HCT116 (cell line): ENCODE measurements at regions of chr3 and their contacts with region 1.

Region 1: DNA sequence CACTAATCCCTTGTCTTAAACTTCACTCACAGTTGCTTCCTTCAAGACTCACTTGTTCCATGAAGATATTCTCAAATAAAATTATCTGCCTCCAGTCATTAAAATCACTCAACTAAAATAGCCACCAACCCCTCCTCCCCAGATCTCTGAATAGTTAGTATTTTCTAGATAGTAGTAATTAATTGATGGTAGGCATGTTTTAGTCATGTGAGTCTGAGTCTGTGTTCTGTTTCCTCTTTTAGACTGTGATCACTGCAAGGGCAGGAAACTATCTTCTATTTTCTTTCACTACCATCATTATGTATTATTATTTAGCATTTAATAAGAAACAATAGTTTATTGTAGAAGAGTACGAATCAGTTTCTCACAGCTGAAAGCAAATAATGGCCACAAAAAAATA is 1080.5 kb downstream of the IGSF11 start:
- DNase-seq: no peak
- ATAC-seq: no peak
- H3K4me3 ChIP-seq: no peak overlapping the region
- H3K27ac ChIP-seq: no peak overlapping the region
- H3K4me1 ChIP-seq: no peaks in the 10 kb centered on the region
- H3K27me3 ChIP-seq: 0 out of 2 replicates have a peak, but pooled peaks cover 4% of the 10 kb centered on the region
- CTCF ChIP-seq: no peak
- POLR2A ChIP-seq: no peak
- RAD21 ChIP-seq: no peak

Region 2: DNA sequence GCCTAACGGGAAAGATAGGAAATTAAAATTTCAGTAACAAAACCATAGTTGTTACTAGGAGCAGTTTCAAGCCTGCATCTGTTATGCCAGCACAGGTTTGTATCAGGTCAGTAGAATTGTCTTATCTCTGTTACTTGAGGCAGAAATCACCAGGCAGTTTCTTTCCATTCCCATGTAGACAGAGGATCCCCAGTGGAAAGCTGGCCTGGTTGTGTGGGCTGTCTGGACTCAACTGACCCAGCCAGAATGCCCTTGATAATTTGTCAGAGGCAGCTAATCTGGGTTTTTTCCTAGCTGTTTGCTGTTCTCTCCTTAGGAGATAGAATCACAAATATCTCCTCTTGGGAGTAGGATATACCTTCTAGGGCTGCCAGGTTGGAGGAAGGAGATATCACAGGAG is 35.9 kb after region 1 on chr3:
- CTCF ChIA-PET with region 1: no interaction called
- POLR2A ChIA-PET with region 1: no interaction called
- RAD21 ChIA-PET with region 1: no interaction called
- intact Hi-C with region 1: no loop called
- DNase-seq: no peak
- ATAC-seq: no peak
- H3K4me3 ChIP-seq: no peak overlapping the region
- H3K27ac ChIP-seq: no peak overlapping the region
- H3K4me1 ChIP-seq: no peaks in the 10 kb centered on the region
- H3K27me3 ChIP-seq: peaks cover 14% of the 10 kb centered on the region
- CTCF ChIP-seq: no peak
- POLR2A ChIP-seq: no peak
- RAD21 ChIP-seq: no peak

Region 3: DNA sequence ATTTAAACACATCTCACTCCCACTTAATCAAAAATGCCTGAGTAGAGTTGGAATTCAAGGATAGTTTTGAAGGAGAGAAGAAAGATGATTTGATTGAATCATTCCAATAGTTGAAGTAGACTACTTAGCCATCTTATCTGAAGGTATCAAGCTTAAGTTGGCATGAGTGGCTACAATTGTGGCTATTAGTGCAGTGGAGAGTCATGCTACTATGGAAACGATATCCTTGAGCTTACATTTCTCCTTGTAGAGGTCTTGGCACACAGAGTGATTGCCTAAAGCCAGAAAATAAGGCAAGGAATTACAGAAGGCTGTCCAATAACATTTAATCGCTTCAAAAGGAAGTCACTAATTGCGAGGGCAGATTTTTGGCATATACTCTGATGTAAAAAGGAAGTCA is 57.8 kb after region 1 on chr3:
- CTCF ChIA-PET with region 1: no interaction called
- POLR2A ChIA-PET with region 1: no interaction called
- RAD21 ChIA-PET with region 1: no interaction called
- intact Hi-C with region 1: loop called (anchors 5 kb)
- DNase-seq: no peak
- ATAC-seq: no peak
- H3K4me3 ChIP-seq: no peak overlapping the region
- H3K27ac ChIP-seq: no peak overlapping the region
- H3K4me1 ChIP-seq: no peaks in the 10 kb centered on the region
- H3K27me3 ChIP-seq: no peaks in the 10 kb centered on the region
- CTCF ChIP-seq: no peak
- POLR2A ChIP-seq: no peak
- RAD21 ChIP-seq: no peak